Activated CD4-positive, alpha-beta T cell treated with anti-CD3 and anti-CD28 coated beads for 36 hours (primary cell): ENCODE measurements at regions of chr14 and their contacts with region 1.

Region 1: GRCh38 chr14:64880221-64881121 is 764 bp upstream of the SPTB start:
- DNase-seq: peak; percentile 79
- ATAC-seq: peak; percentile 89
- H3K4me3 Mint-ChIP-seq: peak overlapping the region; percentile 72
- H3K27ac Mint-ChIP-seq: no peak overlapping the region
- H3K4me1 Mint-ChIP-seq: peaks cover 10% of the 10 kb centered on the region
- H3K27me3 Mint-ChIP-seq: peaks cover 25% of the 10 kb centered on the region

Region 2: DNA sequence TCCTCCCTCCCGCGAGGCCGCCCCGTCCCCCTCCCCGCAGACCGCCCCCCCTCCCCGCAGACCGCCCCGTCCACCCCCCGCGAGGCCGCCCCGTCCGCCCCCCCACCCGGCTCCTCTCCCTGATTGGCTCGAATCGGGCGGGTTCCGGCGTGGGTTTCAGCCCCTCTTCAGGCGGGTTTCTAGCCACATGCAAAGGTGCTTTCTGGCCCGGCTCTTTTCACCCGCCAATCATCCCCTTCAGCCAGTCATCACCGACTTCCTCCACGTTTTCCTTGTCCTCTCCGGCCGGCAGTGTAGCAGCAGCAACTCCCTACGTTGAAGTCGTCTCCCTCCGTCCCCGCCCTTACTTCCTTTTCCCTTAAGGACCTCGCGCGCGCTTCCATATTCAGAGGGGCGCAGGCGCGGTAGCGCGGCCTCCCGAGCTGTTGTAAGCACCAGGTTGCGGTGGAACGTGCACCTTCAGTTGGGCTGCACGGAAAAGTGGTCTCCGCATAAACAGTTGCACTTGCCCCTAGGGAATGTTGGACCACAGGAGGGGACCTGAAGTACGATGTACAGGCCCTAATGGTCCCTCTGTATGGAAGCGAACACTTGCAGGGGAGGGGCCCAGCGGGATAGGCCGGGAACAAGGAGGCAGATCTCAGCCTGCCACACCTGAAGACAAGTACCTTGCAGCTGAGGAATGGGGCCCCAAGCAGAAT is 541.7 kb before region 1 on chr14:
- CTCF ChIA-PET with region 1: no interaction called
- POLR2A ChIA-PET with region 1: no interaction called
- intact Hi-C with region 1: loop called in 1 of 2 experiments (anchors 10 kb)
- DNase-seq: peak; percentile 92
- ATAC-seq: peak; percentile 88
- H3K4me3 Mint-ChIP-seq: peak overlapping the region; percentile 93
- H3K27ac Mint-ChIP-seq: peak overlapping the region; percentile 87
- H3K4me1 Mint-ChIP-seq: peaks cover 18% of the 10 kb centered on the region
- H3K27me3 Mint-ChIP-seq: no peaks in the 10 kb centered on the region

Region 3: GRCh38 chr14:64540208-64541157 is 340.0 kb before region 1 on chr14 and contains the start of gene HSPA2:
- CTCF ChIA-PET with region 1: no interaction called
- POLR2A ChIA-PET with region 1: no interaction called
- intact Hi-C with region 1: loop called in 1 of 2 experiments (anchors 1 kb)
- DNase-seq: peak; percentile 97
- ATAC-seq: peak; percentile 95
- H3K4me3 Mint-ChIP-seq: peak within 1 kb of the TSS; percentile 81
- H3K27ac Mint-ChIP-seq: peak within 1 kb of the TSS; percentile 96
- H3K4me1 Mint-ChIP-seq: peaks cover 28% of the 10 kb centered on the region
- H3K27me3 Mint-ChIP-seq: peaks cover 39% of the 10 kb centered on the region
- total RNA-seq, gene HSPA2: 3.2 to 4.1 TPM

Region 4: DNA sequence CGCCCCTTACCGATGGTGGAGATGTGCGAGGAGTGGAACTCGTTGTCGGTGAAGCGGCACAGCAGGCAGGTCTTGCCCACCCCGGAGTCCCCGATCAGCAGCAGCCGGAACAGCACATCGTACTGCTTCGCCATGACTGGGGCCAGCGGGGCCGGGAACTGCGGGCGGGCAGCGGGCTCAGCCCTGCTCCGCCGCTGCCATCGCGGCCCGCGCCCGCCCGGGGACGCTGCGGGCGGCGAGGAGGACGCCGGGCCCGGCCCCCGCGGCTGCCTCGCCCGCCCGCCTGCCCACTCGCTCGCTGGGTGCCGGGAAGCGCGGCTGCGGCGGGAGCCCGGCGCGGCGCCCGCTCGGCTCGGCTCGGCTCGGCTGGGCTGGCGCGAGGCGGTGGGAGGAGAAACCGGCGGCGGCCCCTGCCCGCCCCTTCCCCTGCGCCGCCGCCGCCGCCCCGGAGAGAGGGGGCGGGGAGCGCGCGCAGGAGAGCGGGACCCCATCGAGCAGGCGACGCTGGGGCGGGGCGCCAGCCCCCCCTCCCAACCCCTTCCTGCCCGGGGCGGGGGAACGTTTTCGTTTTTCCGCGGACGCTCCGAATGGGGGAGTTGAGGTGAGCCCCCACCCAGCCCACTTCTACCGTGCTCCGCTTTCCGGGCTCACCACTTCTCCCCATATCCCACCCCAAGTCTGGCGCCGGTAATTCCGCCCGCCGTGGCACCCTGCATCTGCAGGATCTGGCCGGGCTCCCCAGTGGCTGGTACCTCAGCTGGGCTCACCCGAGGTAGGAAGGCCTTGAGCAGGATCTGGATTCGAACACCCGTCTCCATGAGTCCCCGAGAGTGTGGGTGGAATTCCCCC is 91.7 kb after region 1 on chr14 and contains the start of gene RAB15:
- CTCF ChIA-PET with region 1: no interaction called
- POLR2A ChIA-PET with region 1: no interaction called
- intact Hi-C with region 1: no loop called
- DNase-seq: peak; percentile 58
- ATAC-seq: peak; percentile 71
- H3K4me3 Mint-ChIP-seq: peak within 1 kb of the TSS; percentile 74
- H3K27ac Mint-ChIP-seq: peak within 1 kb of the TSS; percentile 51
- H3K4me1 Mint-ChIP-seq: peaks cover 17% of the 10 kb centered on the region
- H3K27me3 Mint-ChIP-seq: no peaks in the 10 kb centered on the region
- total RNA-seq, gene RAB15: 3.7 to 5.3 TPM